ENCODE measurements at regions of chr19 and their contacts with region 1.

Region 1: GRCh38 chr19:48646001-48646721 is at the start of gene CA11:
- DNase-seq: peak; percentile 92
- H3K4me3 Mint-ChIP-seq: peak within 1 kb of the TSS; percentile 77
- H3K27ac Mint-ChIP-seq: peak within 1 kb of the TSS; percentile 73
- H3K4me1 Mint-ChIP-seq: peaks cover 46% of the 10 kb centered on the region
- H3K27me3 Mint-ChIP-seq: peaks cover 6% of the 10 kb centered on the region
- total RNA-seq, gene CA11: 3.9 to 4.5 TPM

Region 2: DNA sequence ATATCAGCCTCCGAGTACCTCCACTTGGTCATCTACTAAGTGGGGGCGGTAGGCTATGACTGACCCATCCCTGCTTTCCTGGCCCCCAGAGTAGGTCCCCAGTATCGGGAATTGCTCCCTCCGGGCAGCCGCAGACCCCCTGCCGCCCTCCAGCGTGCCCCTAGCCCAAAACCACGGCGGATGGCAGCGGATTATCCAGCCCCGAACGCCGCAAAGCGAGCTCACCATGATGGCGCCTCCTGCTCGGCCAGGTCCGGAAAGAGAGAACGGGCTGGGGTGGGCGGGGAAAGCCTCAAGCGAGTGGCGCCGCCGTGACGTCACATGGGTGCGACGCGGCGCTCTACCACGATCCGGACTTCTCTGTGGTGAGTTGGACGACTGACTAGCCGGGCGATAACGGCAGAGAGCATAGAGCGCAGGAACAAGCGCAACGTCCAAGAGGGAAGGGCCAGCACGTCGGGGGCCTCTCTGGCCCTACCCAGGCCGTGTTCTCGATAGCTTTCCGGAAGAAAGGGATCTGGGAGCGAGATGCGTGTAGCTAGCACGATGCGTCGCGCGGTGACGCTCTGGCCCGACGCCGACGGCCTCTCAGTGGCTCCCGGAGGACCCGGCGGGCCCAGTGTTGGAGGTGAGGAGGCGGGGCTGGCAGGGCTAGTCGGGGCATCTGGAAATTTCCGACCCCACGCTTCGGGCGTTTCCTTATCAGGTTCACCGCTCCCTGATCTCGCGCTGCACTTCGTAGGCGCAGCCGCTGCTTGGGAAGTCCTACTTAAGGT is 27.1 kb before region 1 on chr19 and contains the starts of genes RPL18 and SPHK2:
- CTCF ChIA-PET with region 1: no interaction called
- POLR2A ChIA-PET with region 1: interaction called, 21 read pairs
- DNase-seq: peak; percentile 97
- H3K4me3 Mint-ChIP-seq: peak within 1 kb of the TSS; percentile 96
- H3K27ac Mint-ChIP-seq: peak within 1 kb of the TSS; percentile 97
- H3K4me1 Mint-ChIP-seq: peaks cover 58% of the 10 kb centered on the region
- H3K27me3 Mint-ChIP-seq: no peaks in the 10 kb centered on the region
- total RNA-seq, gene RPL18: 1,511 to 1,528 TPM
- total RNA-seq, gene SPHK2: 27.7 to 29.5 TPM

Region 3: DNA sequence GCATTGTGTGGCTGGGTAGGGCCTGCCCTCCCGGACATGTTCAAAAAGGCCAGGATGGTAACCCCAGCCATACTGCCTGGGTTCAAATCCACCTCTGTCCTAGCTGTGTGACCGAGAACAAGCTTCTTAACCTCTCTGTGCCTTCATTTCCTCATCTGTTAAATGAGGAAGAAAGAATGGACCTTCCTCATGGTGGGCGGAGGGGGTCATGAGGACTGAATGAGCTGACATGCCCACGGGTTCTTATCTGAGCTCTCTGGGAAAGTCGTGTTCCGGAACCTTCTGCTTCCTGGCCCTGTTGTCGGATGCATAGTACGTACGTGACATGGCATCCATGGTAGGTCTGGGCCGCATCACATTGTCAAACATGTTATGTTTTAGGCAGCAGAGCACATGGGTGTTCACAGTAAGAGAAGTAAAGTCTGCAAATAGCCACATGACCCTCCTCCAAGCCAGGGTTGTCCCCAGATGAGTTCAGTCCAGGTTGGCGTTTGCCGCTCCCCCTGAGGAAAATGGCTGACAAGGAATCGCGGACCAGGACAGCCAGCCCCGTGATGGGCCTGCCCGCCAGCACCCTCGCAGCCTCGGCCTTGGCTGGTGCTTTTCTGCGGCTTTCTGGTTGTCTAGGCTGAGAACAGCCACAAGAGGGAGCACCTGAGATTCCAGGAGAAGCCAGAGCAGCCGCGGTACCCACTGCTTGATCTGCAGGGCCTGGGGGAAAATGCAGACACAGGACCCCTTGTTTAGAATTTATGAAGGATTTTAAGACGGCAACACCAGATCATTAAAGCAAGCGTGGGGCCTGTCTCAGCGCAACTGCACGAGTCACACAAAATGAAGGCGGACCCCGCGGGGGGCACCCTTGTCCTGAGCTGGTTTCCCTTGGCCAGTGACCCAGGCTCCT is 29.0 kb after region 1 on chr19:
- CTCF ChIA-PET with region 1: interaction called, 16 read pairs
- POLR2A ChIA-PET with region 1: no interaction called
- DNase-seq: peak; percentile 76
- H3K4me3 Mint-ChIP-seq: no peak overlapping the region
- H3K27ac Mint-ChIP-seq: no peak overlapping the region
- H3K4me1 Mint-ChIP-seq: peaks cover 5% of the 10 kb centered on the region
- H3K27me3 Mint-ChIP-seq: no peaks in the 10 kb centered on the region

Measured in activated CD4-positive, alpha-beta memory T cell treated with anti-CD3 and anti-CD28 coated beads, Interleukin-2, amount 10 ng/mL, durations not matched to agents 7 days and 5 days (primary cell).